ENCODE measurements at regions of chr2 and their contacts with region 1.

Region 1: GRCh38 chr2:230798769-230799399 is 65.9 kb upstream of the ITM2C start:
- DNase-seq: peak; percentile 61
- ATAC-seq: no peak
- H3K4me3 ChIP-seq: no peak overlapping the region
- H3K4me3 Mint-ChIP-seq: no peak overlapping the region
- H3K27ac ChIP-seq: no peak overlapping the region
- H3K27ac Mint-ChIP-seq: peak overlapping the region; percentile 44
- H3K4me1 ChIP-seq: peaks cover 26 to 29% of the 10 kb centered on the region in 2 donors
- H3K4me1 Mint-ChIP-seq: peaks cover 18% of the 10 kb centered on the region
- H3K27me3 ChIP-seq: no peaks in the 10 kb centered on the region
- H3K27me3 Mint-ChIP-seq: no peaks in the 10 kb centered on the region
- CTCF ChIP-seq: peak; percentile 80

Region 2: DNA sequence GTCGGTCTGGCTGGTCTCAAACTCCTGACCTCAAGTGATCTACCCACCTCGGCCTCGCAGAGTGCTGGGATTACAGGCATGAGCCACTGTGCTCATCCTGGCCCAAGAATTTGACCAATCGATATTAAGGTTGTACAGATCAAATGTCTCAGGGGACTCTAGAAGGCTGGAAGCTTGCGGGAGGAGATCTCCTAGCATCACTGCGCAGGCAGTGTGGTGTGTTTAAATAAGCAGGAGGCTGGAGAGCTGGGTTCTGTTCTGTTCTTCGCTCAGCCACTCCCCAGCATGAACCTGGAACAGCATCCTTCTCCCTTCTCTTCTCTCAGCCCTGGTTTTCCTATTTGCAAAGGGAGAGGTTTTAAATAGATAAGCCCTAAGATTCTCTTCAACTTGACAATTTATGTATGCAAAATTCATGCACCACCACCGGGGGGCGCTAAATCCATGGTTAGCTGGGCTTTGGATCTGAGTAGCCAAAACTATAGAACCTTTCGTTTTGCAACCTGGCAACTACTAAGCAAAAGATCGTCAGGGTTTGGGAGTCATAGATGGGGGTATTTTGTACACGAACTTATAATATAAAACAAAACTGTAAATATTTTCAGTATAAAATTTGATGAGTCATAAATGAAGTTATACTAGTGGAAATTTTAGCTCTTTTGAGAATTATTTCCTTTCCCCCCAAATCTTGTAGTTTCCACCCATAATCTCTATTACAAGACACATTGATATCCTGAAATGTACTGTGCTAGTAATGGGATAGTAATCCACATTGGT is 790.8 kb before region 1 on chr2:
- CTCF ChIA-PET with region 1: interaction called, 17 read pairs
- POLR2A ChIA-PET with region 1: no interaction called
- intact Hi-C with region 1: no loop called
- DNase-seq: peak; percentile 75
- ATAC-seq: peak; percentile 66
- H3K4me3 ChIP-seq: no peak overlapping the region
- H3K4me3 Mint-ChIP-seq: peak overlapping the region; percentile 56
- H3K27ac ChIP-seq: no peak overlapping the region
- H3K27ac Mint-ChIP-seq: no peak overlapping the region
- H3K4me1 ChIP-seq: no peaks in the 10 kb centered on the region
- H3K4me1 Mint-ChIP-seq: peaks cover 5% of the 10 kb centered on the region
- H3K27me3 ChIP-seq: no peaks in the 10 kb centered on the region
- H3K27me3 Mint-ChIP-seq: no peaks in the 10 kb centered on the region
- CTCF ChIP-seq: peak; percentile 95

Region 3: GRCh38 chr2:230564805-230565779 is 233.8 kb before region 1 on chr2:
- CTCF ChIA-PET with region 1: no interaction called
- POLR2A ChIA-PET with region 1: no interaction called
- intact Hi-C with region 1: no loop called
- DNase-seq: peak; percentile 81
- ATAC-seq: peak; percentile 86
- H3K4me3 ChIP-seq: peak overlapping the region in 3 of 5 experiments; percentile 19 to 48 (median 34)
- H3K4me3 Mint-ChIP-seq: peak overlapping the region; percentile 52
- H3K27ac ChIP-seq: peak overlapping the region; percentile 63 to 65
- H3K27ac Mint-ChIP-seq: peak overlapping the region; percentile 57
- H3K4me1 ChIP-seq: peaks cover 14 to 23% of the 10 kb centered on the region in 2 donors
- H3K4me1 Mint-ChIP-seq: peaks cover 25% of the 10 kb centered on the region
- H3K27me3 ChIP-seq: no peaks in the 10 kb centered on the region
- H3K27me3 Mint-ChIP-seq: no peaks in the 10 kb centered on the region
- CTCF ChIP-seq: no peak

Region 4: DNA sequence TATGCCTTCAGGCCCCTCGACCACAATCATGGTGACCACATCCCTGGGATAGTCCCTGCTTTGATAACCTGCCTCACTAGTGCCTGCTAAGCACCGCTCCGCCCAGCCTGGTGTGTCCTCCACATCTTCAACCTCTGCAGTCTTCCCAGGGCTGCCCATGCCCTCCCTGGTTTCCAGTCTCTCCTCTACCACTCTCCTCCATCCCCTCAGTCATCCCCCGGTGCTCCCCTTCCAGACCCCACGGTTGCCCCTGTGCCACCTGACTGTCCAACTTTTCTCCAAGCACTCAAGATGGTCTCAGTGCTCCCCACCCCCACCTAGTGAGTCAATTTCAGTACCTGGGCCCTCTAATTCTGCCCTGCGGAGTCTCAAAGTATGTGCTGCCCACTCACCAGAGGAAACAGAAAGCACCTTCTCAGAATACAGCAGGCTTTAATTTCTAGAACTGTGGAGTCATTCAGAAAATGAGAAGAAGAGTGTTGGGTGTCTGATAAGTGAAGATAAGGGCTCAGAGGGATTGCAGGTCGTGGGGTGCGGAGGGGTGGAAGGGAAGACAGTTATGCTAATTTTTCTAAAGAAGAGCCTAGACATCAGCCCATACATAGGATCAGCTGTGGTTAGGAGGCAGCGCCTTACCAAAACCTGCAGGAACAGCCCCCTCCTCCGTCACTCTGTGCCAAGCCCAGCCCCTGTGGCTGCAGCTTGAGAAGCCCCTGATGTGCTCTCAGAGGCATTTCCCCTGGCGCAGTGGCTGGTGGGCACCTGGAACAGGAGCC is 139.8 kb before region 1 on chr2:
- CTCF ChIA-PET with region 1: interaction called, 3 read pairs
- POLR2A ChIA-PET with region 1: no interaction called
- intact Hi-C with region 1: loop called (anchors 10 kb)
- DNase-seq: peak; percentile 38
- ATAC-seq: no peak
- H3K4me3 ChIP-seq: no peak overlapping the region
- H3K4me3 Mint-ChIP-seq: peak overlapping the region; percentile 52
- H3K27ac ChIP-seq: peak overlapping the region in 1 of 2 donors; percentile 23
- H3K27ac Mint-ChIP-seq: peak overlapping the region; percentile 73
- H3K4me1 ChIP-seq: peaks cover 55 to 67% of the 10 kb centered on the region in 2 donors
- H3K4me1 Mint-ChIP-seq: peaks cover 69% of the 10 kb centered on the region
- H3K27me3 ChIP-seq: no peaks in the 10 kb centered on the region
- H3K27me3 Mint-ChIP-seq: no peaks in the 10 kb centered on the region
- CTCF ChIP-seq: no peak

Region 5: GRCh38 chr2:230694241-230694640 is 104.6 kb before region 1 on chr2:
- CTCF ChIA-PET with region 1: no interaction called
- POLR2A ChIA-PET with region 1: no interaction called
- intact Hi-C with region 1: no loop called
- DNase-seq: no peak
- ATAC-seq: no peak
- H3K4me3 ChIP-seq: no peak overlapping the region
- H3K4me3 Mint-ChIP-seq: no peak overlapping the region
- H3K27ac ChIP-seq: no peak overlapping the region
- H3K27ac Mint-ChIP-seq: no peak overlapping the region
- H3K4me1 ChIP-seq: no peaks in the 10 kb centered on the region
- H3K4me1 Mint-ChIP-seq: no peaks in the 10 kb centered on the region
- H3K27me3 ChIP-seq: no peaks in the 10 kb centered on the region
- H3K27me3 Mint-ChIP-seq: no peaks in the 10 kb centered on the region
- CTCF ChIP-seq: no peak

Region 6: GRCh38 chr2:230781130-230781797 is 17.6 kb before region 1 on chr2:
- CTCF ChIA-PET with region 1: interaction called, 14 read pairs
- POLR2A ChIA-PET with region 1: no interaction called
- intact Hi-C with region 1: no loop called
- DNase-seq: no peak
- ATAC-seq: no peak
- H3K4me3 ChIP-seq: no peak overlapping the region
- H3K4me3 Mint-ChIP-seq: no peak overlapping the region
- H3K27ac ChIP-seq: no peak overlapping the region
- H3K27ac Mint-ChIP-seq: peak overlapping the region; percentile 4
- H3K4me1 ChIP-seq: peaks cover 0 to 12% of the 10 kb centered on the region in 2 donors
- H3K4me1 Mint-ChIP-seq: peaks cover 49% of the 10 kb centered on the region
- H3K27me3 ChIP-seq: no peaks in the 10 kb centered on the region
- H3K27me3 Mint-ChIP-seq: no peaks in the 10 kb centered on the region
- CTCF ChIP-seq: no peak

Region 7: GRCh38 chr2:230787101-230787500 is 11.8 kb before region 1 on chr2:
- CTCF ChIA-PET with region 1: interaction called, 17 read pairs
- POLR2A ChIA-PET with region 1: no interaction called
- intact Hi-C with region 1: no loop called
- DNase-seq: no peak
- ATAC-seq: no peak
- H3K4me3 ChIP-seq: no peak overlapping the region
- H3K4me3 Mint-ChIP-seq: no peak overlapping the region
- H3K27ac ChIP-seq: no peak overlapping the region
- H3K27ac Mint-ChIP-seq: no peak overlapping the region
- H3K4me1 ChIP-seq: peaks cover 0 to 12% of the 10 kb centered on the region in 2 donors
- H3K4me1 Mint-ChIP-seq: peaks cover 23% of the 10 kb centered on the region
- H3K27me3 ChIP-seq: no peaks in the 10 kb centered on the region
- H3K27me3 Mint-ChIP-seq: no peaks in the 10 kb centered on the region
- CTCF ChIP-seq: no peak

Region 8: DNA sequence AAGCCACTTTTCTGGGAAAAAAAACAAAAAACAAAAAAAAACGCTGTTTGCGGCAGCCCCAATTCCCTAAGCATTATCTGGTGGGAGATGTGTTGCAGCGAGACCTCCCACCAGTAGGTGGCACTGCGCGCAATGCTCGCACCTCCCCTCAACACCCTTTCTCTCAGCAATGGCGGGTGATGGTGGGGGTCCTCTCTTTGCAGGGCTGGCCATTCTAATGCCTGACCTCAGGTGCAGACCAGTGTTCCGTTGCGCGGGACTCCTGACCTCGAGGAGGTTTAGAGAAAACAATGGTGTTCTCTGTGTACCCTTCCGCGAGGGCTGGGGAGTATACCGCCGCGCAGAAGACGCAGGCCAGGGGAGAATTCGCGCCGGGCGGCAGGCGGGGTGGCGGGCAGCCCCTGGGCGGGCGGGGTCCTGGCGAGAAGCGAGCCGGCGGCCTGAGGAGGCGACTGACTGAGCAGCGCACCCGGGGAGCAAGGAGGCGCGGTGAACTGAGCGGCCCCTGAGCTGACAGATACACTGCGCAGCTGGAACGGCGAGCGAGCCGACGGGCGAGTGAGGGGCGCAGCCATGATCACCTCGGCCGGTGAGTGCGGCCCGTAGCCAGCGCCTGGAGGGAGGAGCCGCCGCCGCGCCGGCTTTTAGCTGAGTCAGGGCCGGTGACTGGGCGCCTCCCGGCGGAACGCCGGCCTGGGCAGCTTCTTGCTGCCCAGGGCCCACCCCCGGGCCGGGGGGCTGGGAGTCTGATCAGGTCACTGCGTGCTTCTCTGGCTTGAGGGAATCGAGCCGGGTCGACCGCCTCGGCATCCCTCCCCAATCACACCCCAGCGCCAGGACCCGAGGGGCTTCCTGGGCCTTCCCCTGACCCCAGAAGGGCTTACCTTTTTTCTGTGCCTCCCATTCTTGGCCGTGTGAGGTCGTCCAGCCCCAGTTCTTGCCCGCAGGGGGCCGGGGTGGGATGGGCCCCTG is 257.9 kb after region 1 on chr2 and contains the start of gene PSMD1:
- CTCF ChIA-PET with region 1: no interaction called
- POLR2A ChIA-PET with region 1: no interaction called
- intact Hi-C with region 1: no loop called
- DNase-seq: peak; percentile 98
- ATAC-seq: peak; percentile 87
- H3K4me3 ChIP-seq: peak within 1 kb of the TSS; percentile 75 to 99 (median 90)
- H3K4me3 Mint-ChIP-seq: peak within 1 kb of the TSS; percentile 100
- H3K27ac ChIP-seq: peak within 1 kb of the TSS; percentile 85 to 86
- H3K27ac Mint-ChIP-seq: peak within 1 kb of the TSS; percentile 100
- H3K4me1 ChIP-seq: peaks cover 22 to 27% of the 10 kb centered on the region in 2 donors
- H3K4me1 Mint-ChIP-seq: peaks cover 39% of the 10 kb centered on the region
- H3K27me3 ChIP-seq: peaks cover 0 to 6% (median 0%) of the 10 kb centered on the region in 4 experiments
- H3K27me3 Mint-ChIP-seq: peaks cover 16% of the 10 kb centered on the region
- CTCF ChIP-seq: peak; percentile 91
- total RNA-seq, gene PSMD1: 45.4 and 48.2 TPM in 2 replicates

Measured in B cell (primary cell).